MCF 10A (cell line): ENCODE measurements at regions of chr3 and their contacts with region 1.

Region 1: DNA sequence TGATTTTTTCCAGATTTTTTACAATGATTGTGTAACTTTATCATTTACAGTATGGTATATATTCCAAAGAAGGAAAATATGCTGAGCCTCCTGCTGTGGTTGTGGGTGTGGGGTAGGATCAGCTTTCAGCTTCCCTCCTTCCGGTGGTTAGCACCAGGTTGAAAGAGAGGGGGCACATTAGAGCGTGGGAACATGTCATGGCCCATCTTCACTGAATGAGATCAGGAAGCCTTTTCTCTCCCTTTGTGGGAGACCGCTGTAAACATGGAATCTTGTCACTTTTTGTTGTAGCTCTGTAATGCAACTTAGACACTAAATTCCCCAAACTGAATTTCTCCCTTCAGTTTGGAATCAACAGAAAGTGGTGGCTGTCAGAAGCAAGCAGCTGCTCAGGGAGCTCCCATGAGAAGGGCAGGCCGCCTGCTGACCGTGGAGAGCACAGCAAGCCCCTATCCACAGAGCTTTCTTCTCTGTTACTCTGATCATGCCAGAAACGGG is 86.7 kb upstream of the LIMD1 start:
- DNase-seq: no peak
- H3K4me3 Mint-ChIP-seq: no peak overlapping the region
- H3K27ac Mint-ChIP-seq: no peak overlapping the region
- H3K4me1 Mint-ChIP-seq: no peaks in the 10 kb centered on the region
- H3K27me3 Mint-ChIP-seq: no peaks in the 10 kb centered on the region
- CTCF ChIP-seq: no peak

Region 2: GRCh38 chr3:45537970-45538640 is 30.2 kb after region 1 on chr3:
- CTCF ChIA-PET with region 1: no interaction called
- POLR2A ChIA-PET with region 1: no interaction called
- intact Hi-C with region 1: no loop called
- DNase-seq: no peak
- H3K4me3 Mint-ChIP-seq: no peak overlapping the region
- H3K27ac Mint-ChIP-seq: no peak overlapping the region
- H3K4me1 Mint-ChIP-seq: no peaks in the 10 kb centered on the region
- H3K27me3 Mint-ChIP-seq: no peaks in the 10 kb centered on the region
- CTCF ChIP-seq: no peak

Region 3: GRCh38 chr3:45551214-45552010 is 43.5 kb after region 1 on chr3:
- CTCF ChIA-PET with region 1: interaction called, 11 read pairs
- POLR2A ChIA-PET with region 1: no interaction called
- intact Hi-C with region 1: no loop called
- DNase-seq: peak; percentile 94
- H3K4me3 Mint-ChIP-seq: peak overlapping the region; percentile 6
- H3K27ac Mint-ChIP-seq: peak overlapping the region; percentile 57
- H3K4me1 Mint-ChIP-seq: peaks cover 56% of the 10 kb centered on the region
- H3K27me3 Mint-ChIP-seq: no peaks in the 10 kb centered on the region
- CTCF ChIP-seq: no peak

Region 4: DNA sequence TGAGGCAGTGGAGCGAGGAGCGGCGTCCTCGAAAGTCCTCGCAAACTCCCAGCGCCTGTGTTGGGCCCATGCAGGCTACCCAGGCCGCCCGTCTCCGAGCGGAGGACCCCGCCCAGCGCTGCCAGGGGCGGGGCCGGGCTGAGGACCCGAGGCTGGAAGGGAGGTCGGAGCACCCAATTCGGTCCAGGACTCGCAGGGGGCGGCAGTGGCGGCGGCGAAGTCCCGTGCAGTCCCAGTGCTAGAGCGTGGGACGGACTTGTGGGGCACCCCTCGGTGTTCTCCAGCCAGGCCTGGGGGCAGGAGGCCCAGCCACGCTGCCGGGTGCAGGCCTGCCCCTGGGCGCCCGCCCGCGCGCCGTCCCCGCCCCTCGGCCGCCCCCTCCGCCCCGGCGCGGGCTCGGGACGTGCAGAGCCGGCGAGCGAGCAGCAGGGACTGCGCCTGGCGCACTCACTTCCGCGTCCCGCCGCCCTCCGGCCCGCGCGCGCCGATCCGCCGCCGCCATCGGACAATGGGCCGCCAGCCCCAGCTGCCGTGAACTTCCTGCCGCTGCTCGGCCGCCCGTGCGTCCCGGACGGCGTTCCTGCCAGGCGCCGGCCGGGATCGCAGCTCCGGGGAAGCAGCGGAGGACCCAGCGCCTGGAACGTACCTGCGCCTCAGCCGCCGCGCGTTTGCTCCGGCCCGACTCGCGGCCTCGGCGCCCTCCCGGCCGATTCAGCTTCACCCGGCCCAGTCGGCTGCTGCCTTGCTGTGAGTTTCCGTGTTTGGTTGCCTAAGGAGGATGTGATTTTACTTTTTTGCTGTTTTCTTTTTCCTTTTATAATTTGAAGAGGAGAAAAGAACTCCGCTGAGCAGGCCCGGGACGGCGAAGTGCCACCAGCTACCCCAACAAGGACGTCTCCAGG is 86.1 kb after region 1 on chr3:
- CTCF ChIA-PET with region 1: interaction called, 4 read pairs
- POLR2A ChIA-PET with region 1: no interaction called
- intact Hi-C with region 1: loop called (anchors 1 kb)
- DNase-seq: peak; percentile 75
- H3K4me3 Mint-ChIP-seq: peak overlapping the region; percentile 78
- H3K27ac Mint-ChIP-seq: peak overlapping the region; percentile 76
- H3K4me1 Mint-ChIP-seq: peaks cover 20% of the 10 kb centered on the region
- H3K27me3 Mint-ChIP-seq: no peaks in the 10 kb centered on the region
- CTCF ChIP-seq: no peak

Region 5: DNA sequence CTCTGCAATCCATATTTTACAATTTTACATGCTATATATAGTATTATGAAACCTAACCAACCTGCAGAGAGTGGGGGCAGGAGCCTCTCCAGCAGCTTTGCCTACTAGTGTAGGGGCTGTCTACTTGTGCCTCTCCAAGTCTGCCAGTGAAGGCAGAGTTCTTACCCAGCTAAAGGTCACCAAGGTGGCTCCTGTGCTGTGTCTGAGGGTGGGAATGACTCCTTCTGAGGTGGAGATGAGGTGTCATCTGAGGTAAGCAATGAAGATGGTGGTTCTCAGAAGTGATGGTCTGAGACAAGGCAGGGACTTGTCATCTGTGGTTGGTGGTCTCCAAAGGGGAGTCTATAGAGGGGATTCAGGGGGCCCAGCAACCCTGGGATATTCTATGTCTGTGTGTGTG is 228.8 kb after region 1 on chr3:
- CTCF ChIA-PET with region 1: no interaction called
- POLR2A ChIA-PET with region 1: no interaction called
- intact Hi-C with region 1: no loop called
- DNase-seq: no peak
- H3K4me3 Mint-ChIP-seq: no peak overlapping the region
- H3K27ac Mint-ChIP-seq: peak overlapping the region; percentile 72
- H3K4me1 Mint-ChIP-seq: no peaks in the 10 kb centered on the region
- H3K27me3 Mint-ChIP-seq: no peaks in the 10 kb centered on the region
- CTCF ChIP-seq: no peak

Region 6: DNA sequence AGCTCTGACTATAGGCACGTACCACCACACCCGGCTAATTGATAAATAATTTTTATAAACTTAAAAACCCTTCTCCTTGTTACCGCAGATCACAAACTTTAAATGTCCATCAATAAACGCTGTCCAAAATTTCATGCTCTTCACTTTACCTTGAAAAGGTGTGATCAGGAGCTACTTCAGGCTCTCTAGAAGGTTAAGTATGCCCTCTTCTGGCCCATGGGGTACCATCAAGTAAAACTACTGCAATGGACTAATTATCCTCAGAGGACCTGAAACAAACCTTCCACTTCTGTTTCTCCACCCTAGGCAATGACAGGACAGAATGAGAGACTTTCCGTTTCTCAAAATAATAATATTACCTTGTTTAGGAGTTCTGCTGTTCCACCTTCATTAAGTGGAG is 324.8 kb after region 1 on chr3:
- CTCF ChIA-PET with region 1: no interaction called
- POLR2A ChIA-PET with region 1: no interaction called
- intact Hi-C with region 1: loop called (anchors 5 kb)
- DNase-seq: peak; percentile 51
- H3K4me3 Mint-ChIP-seq: no peak overlapping the region
- H3K27ac Mint-ChIP-seq: no peak overlapping the region
- H3K4me1 Mint-ChIP-seq: no peaks in the 10 kb centered on the region
- H3K27me3 Mint-ChIP-seq: no peaks in the 10 kb centered on the region
- CTCF ChIP-seq: peak; percentile 22